ENCODE measurements at regions of chr9 and their contacts with region 1.

Region 1: DNA sequence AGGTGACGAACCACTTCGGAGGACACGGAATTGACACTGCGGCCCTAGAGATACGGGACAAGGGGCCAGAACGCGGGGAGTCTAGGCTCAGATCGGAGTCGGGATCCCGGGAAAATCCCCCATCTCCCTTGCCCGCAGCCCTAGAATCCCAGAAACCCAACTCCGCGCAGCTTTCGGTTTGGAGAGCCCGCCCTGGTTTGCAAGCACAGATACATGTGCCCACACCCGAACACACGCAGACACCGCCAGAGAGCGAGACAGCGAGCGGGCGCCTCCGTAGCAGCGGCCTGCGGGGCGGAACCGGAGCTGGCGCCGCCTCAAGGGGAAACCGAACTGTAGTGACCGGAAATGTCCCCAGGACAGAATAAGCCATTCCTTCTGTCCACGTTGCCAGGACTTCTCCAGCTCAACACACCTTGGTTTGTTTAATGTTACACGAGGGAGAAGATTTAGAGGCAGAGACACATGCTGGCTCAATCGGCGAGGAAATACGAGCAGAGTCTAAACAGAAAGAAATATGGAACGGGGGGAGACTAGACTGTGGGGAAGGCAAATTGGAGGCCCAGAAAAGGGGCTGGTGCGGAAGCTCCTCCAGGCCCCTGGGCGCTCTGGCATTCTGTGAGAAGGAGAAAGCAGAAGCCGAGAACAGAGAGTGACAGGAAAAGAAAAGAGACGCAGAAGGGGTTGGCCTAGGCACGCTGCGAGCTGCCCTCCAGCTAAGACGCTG is 2.9 kb upstream of the PAX5 start:
- DNase-seq: peak; percentile 47 to 68
- ATAC-seq: peak; percentile 83

Region 2: DNA sequence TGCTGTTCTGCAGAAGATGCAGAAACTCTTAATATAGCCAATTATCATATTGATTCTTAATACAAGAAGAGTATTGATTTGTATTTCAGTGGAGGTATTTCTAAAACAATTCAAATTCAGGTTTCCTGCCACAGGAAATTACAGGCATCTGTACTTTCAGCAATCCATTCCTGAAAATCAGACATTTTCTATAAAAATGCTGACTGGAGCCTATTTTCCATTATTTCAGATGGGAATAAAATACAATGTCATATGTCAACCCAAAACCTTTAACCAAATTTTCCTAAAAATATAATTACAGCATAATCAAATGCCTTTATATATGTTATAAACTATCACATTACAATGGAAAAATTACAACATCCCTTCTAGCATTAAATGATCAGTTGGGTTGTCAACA is 332.8 kb before region 1 on chr9:
- intact Hi-C with region 1: no loop called
- DNase-seq: no peak
- ATAC-seq: no peak

Region 3: DNA sequence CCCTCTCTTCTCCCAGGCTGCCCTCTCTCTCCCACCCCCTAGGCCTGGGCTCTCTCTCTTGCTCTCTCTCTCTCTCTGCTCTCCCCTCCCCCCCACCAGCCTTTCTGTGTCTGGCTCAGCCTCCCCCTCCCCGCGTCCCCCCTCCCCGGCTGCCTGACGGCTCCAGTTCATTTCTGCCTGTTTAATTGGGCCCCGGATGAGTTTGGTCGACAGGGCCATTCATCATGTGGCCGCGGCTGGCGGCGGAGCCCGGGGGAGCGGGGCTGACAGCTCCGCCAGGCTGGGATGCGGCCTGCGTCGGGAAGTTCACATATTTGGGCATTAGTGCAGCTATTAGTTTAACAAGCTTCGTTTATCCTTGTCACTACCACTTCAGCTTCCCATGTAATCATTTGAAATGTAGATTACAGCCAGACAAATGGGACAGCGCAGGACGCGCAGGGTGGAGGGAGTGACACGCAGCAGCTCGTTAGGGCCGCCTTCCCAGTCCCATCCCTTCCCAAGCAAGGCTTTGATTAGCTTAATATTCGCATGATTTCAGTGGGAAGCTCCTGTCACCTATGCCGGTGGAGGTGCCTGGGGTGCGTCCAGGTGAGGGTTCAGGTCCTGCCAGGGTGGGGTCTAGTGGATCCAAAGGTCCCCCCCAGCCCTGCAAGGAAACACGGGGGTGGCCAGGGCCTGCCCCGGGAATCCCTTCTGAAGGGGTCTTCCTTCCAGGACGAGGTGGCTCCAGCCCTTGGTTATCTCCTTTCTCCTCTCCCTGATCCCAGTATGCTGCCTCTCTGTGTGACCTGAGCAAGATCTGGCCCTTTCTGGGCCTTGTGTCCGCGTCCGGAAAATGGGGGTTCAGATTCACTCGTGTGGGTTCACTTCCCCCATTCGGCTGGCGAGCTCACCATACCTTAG is 217.7 kb before region 1 on chr9:
- intact Hi-C with region 1: no loop called
- DNase-seq: peak in 1 of 2 donors; percentile 11
- ATAC-seq: no peak

Region 4: GRCh38 chr9:36980148-36980974 is 56.6 kb before region 1 on chr9:
- intact Hi-C with region 1: loop called in 1 of 2 experiments (anchors 10 kb)
- DNase-seq: no peak
- ATAC-seq: no peak

Region 5: DNA sequence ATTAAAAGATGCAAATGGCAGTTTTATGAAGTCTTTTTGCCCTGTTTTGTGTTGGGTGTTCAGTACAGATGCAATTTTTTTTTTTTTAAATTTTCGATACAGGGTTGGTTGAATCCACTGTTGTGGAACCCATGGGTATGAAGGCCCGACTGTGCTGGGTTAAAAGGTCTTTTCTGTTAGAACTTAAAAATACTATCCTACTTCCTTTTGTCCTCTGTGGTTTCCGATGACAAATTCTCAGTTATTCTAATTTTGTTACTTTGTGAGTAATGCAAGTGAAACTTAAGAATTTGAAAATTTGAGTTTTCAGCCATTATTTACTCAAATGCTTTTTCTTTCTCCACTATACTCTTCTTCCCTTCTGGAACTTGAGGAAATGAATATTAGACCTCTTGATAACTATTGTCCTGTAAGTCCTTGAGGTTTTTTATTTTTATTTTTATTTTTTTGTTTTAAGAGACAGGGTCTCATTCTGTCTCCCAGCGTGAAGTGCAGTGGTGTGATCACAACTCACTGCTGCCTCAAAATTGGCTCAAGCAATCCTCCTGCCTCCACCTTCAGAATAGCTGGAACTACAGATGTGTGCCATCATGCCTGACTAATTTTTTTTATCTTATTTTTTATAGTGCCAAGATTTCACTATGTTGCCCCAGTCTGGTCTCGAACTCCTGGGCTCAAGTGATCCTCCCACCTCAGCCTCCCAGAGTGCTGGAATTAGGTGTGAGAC is 150.9 kb after region 1 on chr9:
- intact Hi-C with region 1: no loop called
- DNase-seq: no peak
- ATAC-seq: no peak

Measured in left colon (tissue), 2 donors.